ENCODE measurements at regions of chr4 and their contacts with region 1.

Region 1: GRCh38 chr4:47510506-47511143 is 25.6 kb downstream of the ATP10D start:
- DNase-seq: peak; percentile 41 to 86 (median 85)
- H3K4me3 ChIP-seq: no peak overlapping the region
- H3K27ac ChIP-seq: peak overlapping the region in 1 of 2 experiments; percentile 45
- H3K4me1 ChIP-seq: peaks cover 0 to 11% (median 6%) of the 10 kb centered on the region in 4 experiments
- H3K27me3 ChIP-seq: no peaks in the 10 kb centered on the region

Region 2: GRCh38 chr4:47562297-47562696 is 51.7 kb after region 1 on chr4:
- CTCF ChIA-PET with region 1: interaction called, 35 read pairs
- POLR2A ChIA-PET with region 1: no interaction called
- DNase-seq: peak in 2 of 3 donors; percentile 33 to 70
- H3K4me3 ChIP-seq: no peak overlapping the region
- H3K27ac ChIP-seq: no peak overlapping the region
- H3K4me1 ChIP-seq: peaks cover 0 to 9% (median 8%) of the 10 kb centered on the region in 4 experiments
- H3K27me3 ChIP-seq: no peaks in the 10 kb centered on the region

Region 3: DNA sequence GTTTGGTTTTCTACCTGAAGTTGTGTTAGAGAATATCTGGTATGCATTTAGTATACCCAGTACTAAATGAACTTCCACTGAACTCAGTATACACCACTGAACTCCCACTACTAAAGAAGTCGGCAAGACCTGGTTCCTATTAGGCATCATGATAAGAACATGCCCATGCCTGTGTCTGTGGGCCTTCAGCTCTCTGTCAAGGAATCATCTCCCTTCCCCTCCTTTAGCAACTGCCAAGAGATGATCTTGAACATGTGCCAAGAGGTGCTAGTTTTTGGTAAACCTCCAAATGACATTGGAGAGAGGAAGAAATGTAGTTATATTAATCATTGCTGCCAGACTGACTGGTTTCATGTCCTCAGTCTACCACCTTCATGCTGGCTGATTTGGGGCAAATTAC is 87.7 kb after region 1 on chr4:
- CTCF ChIA-PET with region 1: no interaction called
- POLR2A ChIA-PET with region 1: no interaction called
- DNase-seq: no peak
- H3K4me3 ChIP-seq: no peak overlapping the region
- H3K27ac ChIP-seq: no peak overlapping the region
- H3K4me1 ChIP-seq: no peaks in the 10 kb centered on the region
- H3K27me3 ChIP-seq: no peaks in the 10 kb centered on the region

Region 4: GRCh38 chr4:47729131-47729680 is 218.6 kb after region 1 on chr4:
- CTCF ChIA-PET with region 1: no interaction called
- POLR2A ChIA-PET with region 1: no interaction called
- DNase-seq: no peak
- H3K4me3 ChIP-seq: no peak overlapping the region
- H3K27ac ChIP-seq: no peak overlapping the region
- H3K4me1 ChIP-seq: no peaks in the 10 kb centered on the region
- H3K27me3 ChIP-seq: peaks cover 0 to 2% (median 0%) of the 10 kb centered on the region in 5 experiments